Activated CD4-positive, alpha-beta T cell treated with anti-CD3 and anti-CD28 coated beads, Interleukin-2, amount 10 ng/mL, durations not matched to agents 24 days and 14 days (primary cell): ENCODE measurements at regions of chr11 and their contacts with region 1.

Region 1: DNA sequence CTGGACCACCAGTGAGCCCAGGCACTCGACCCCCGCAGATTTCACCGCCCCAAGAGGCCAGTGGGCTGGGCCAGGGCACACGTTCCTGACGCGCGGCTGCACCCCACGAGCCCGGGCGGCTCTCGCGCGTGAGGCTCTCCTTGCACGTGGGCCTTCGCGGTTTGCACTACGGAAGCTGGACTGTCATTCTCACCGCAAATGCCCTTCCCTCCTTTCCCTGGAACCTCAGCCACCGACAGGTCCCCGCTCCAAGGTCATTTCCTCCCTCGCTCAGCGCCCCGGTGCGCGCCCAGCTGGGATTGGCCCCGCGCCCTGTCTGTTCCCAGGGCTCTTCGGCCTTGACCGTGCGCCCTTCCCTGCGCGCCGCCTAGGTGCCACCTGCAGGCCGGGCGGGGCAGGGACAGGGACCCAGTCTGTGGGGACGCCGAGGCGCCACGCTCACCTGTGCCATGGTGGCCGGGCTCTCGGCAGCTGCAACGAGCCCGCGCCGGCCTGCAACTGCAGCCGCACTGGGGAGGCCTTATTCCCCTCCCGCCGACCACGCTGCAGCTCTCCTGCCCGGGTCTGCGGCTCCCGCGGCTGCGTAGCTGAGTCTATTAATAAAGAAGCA is 2.1 kb upstream of the CPT1A start:
- DNase-seq: peak; percentile 90
- H3K4me3 Mint-ChIP-seq: peak overlapping the region; percentile 81
- H3K27ac Mint-ChIP-seq: peak overlapping the region; percentile 81
- H3K4me1 Mint-ChIP-seq: peaks cover 30% of the 10 kb centered on the region
- H3K27me3 Mint-ChIP-seq: peaks cover 15% of the 10 kb centered on the region

Region 2: GRCh38 chr11:68506908-68507307 is 336.9 kb before region 1 on chr11:
- intact Hi-C with region 1: no loop called
- DNase-seq: no peak
- H3K4me3 Mint-ChIP-seq: no peak overlapping the region
- H3K27ac Mint-ChIP-seq: no peak overlapping the region
- H3K4me1 Mint-ChIP-seq: peaks cover 40% of the 10 kb centered on the region
- H3K27me3 Mint-ChIP-seq: no peaks in the 10 kb centered on the region

Region 3: GRCh38 chr11:68632802-68633201 is 211.0 kb before region 1 on chr11:
- intact Hi-C with region 1: loop called (anchors 1 kb)
- DNase-seq: peak; percentile 82
- H3K4me3 Mint-ChIP-seq: no peak overlapping the region
- H3K27ac Mint-ChIP-seq: no peak overlapping the region
- H3K4me1 Mint-ChIP-seq: no peaks in the 10 kb centered on the region
- H3K27me3 Mint-ChIP-seq: peaks cover 20% of the 10 kb centered on the region

Region 4: DNA sequence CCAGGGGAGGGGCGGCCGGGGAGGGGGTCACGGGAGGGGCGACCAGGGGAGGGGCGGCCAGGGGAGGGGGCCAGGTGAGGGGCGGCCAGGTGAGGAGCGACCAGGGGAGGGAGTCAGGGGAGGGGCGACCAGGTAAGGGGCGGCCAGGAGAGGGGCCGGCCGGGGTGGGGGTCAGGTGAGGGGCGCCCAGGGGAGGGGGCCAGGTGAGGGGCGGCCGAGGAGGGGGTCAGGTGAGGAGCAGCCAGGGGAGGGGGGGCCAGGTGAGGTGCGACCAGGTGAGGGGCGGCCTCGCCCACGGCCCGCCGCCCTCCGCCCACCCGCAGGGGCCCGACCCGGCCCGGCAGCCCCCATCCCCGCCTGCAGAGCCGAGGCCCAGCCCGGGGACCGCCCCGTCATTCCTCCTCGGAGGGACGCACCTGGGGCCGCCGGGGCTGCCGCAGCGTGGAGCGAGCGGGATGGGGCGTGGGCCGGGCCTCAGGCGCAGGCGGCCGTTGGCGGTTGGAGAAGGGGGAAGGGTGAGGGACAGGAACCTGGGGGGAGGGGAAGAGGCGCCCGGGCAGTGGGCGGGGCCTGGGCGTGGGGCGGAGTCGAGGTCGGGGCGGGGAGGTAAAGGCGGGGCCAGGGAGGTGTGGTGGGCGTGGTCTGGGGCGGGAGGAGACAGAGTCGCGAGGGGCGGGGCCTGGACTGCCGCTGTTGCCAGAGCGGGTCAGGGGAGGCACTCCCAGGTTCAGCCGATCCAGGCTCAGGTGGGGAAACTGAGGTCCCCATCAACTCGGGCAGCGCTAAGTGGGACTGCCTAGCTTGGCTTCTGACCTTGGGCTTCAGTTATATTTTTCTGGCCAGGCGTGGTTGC is 92.6 kb before region 1 on chr11 and contains the start of gene TESMIN:
- intact Hi-C with region 1: loop called (anchors 2 kb)
- DNase-seq: peak; percentile 96
- H3K4me3 Mint-ChIP-seq: peak within 1 kb of the TSS; percentile 85
- H3K27ac Mint-ChIP-seq: peak within 1 kb of the TSS; percentile 62
- H3K4me1 Mint-ChIP-seq: peaks cover 5% of the 10 kb centered on the region
- H3K27me3 Mint-ChIP-seq: peaks cover 3% of the 10 kb centered on the region
- total RNA-seq, gene TESMIN: 1.4 and 1.6 TPM in 2 replicates

Region 5: DNA sequence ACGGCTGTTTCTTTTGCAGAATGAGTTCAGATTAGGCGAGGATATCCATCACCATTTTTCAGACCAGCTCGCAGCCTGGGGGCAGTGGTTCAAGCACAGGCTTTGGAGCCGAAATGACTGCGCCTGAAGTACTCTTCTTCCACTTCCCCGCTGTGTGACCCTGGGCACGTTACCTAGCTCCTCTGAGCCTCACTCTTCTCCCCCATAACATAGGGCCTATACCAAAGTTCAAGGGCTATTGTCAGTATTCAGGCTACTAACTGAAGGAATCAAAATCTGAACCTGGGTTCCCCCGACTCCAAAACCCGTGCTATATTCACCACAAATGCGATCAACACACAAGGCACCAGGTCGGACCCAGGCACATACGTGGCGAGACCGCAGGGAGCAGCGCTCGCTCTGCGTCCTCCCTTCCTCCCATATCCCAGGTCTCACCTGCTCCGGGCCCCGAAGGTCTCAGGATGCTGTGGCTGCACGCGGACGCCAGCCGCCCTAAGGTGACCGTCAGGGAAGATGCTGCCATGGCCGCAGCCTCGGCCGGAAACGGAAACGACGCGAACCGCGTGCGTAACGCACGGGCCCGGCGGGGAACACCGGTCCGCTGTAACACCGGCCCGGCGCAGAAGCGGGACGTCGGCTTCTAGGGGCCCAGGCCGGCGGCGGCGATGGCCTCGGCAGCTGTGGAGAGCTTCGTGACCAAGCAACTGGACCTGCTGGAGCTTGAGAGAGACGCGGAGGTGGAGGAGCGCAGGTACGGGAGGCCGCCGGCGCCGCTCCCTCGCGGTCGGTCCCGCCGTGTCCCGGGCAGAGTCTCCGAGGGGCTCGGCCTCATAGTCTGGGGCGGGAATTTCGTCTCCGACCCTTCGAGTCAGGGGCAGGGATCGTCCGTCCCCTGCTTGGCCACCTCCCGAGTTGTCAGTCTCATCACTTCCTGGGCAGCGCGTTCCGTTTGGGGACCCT is 59.8 kb after region 1 on chr11 and contains the starts of genes IGHMBP2 and MRPL21:
- intact Hi-C with region 1: loop called (anchors 1 kb)
- DNase-seq: peak; percentile 97
- H3K4me3 Mint-ChIP-seq: peak within 1 kb of the TSS; percentile 99
- H3K27ac Mint-ChIP-seq: peak within 1 kb of the TSS; percentile 94
- H3K4me1 Mint-ChIP-seq: peaks cover 26% of the 10 kb centered on the region
- H3K27me3 Mint-ChIP-seq: no peaks in the 10 kb centered on the region
- total RNA-seq, gene IGHMBP2: 39.2 and 39.8 TPM in 2 replicates
- total RNA-seq, gene MRPL21: 120 and 128 TPM in 2 replicates